T-cell (primary cell): ENCODE measurements at regions of chr16 and their contacts with region 1.

Region 1: GRCh38 chr16:22232277-22233042 is 26.4 kb downstream of the EEF2K start:
- DNase-seq: no peak
- ATAC-seq: no peak
- H3K4me3 ChIP-seq: no peak overlapping the region
- H3K4me3 Mint-ChIP-seq: no peak overlapping the region
- H3K27ac ChIP-seq: no peak overlapping the region
- H3K27ac Mint-ChIP-seq: no peak overlapping the region
- H3K4me1 ChIP-seq: no peaks in the 10 kb centered on the region
- H3K4me1 Mint-ChIP-seq: no peaks in the 10 kb centered on the region
- H3K27me3 ChIP-seq: no peaks in the 10 kb centered on the region
- H3K27me3 Mint-ChIP-seq: no peaks in the 10 kb centered on the region

Region 2: GRCh38 chr16:21943571-21943970 is 288.9 kb before region 1 on chr16:
- CTCF ChIA-PET with region 1: interaction called in 1 of 2 experiments, 10 read pairs
- POLR2A ChIA-PET with region 1: no interaction called
- DNase-seq: no peak
- ATAC-seq: no peak
- H3K4me3 ChIP-seq: no peak overlapping the region
- H3K4me3 Mint-ChIP-seq: no peak overlapping the region
- H3K27ac ChIP-seq: no peak overlapping the region
- H3K27ac Mint-ChIP-seq: no peak overlapping the region
- H3K4me1 ChIP-seq: no peaks in the 10 kb centered on the region
- H3K4me1 Mint-ChIP-seq: peaks cover 7 to 13% (median 11%) of the 10 kb centered on the region in 3 donors
- H3K27me3 ChIP-seq: no peaks in the 10 kb centered on the region
- H3K27me3 Mint-ChIP-seq: no peaks in the 10 kb centered on the region